ENCODE measurements at regions of chr3 and their contacts with region 1.

Region 1: DNA sequence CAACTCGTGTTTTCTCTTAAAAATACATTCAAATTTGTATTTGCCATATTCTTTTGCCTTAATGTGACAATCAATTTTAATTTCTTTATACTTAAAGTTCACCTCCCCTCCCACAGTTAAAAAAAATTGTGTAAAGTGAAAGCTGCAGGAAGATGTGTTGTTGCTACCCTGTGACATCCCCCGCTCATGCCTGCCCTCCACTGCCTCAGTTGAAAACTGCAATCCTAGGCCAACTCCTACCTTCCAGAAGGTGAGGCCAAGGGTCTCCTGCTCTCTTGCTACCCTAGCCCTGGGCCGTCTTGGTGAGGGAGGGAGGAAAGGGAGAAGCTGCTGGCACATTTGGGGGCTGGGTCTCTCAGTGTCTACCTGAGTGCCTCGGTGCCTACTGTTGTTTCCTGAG is 57.0 kb upstream of the CMTM7 start:
- DNase-seq: peak in 1 of 2 donors; percentile 20
- H3K4me3 ChIP-seq: no peak overlapping the region
- H3K27ac ChIP-seq: no peak overlapping the region
- H3K4me1 ChIP-seq: no peaks in the 10 kb centered on the region
- H3K27me3 ChIP-seq: no peaks in the 10 kb centered on the region
- CTCF ChIP-seq: peak in 1 of 6 experiments; percentile 32
- POLR2A ChIP-seq: no peak

Region 2: GRCh38 chr3:32177702-32178198 is 156.9 kb before region 1 on chr3:
- intact Hi-C with region 1: loop called (anchors 5 kb)
- DNase-seq: peak; percentile 67 to 74
- H3K4me3 ChIP-seq: no peak overlapping the region
- H3K27ac ChIP-seq: no peak overlapping the region
- H3K4me1 ChIP-seq: peaks cover 6 to 9% of the 10 kb centered on the region in 2 donors
- H3K27me3 ChIP-seq: no peaks in the 10 kb centered on the region
- CTCF ChIP-seq: peak in 5 of 6 experiments; percentile 62 to 95 (median 78)
- POLR2A ChIP-seq: no peak

Region 3: DNA sequence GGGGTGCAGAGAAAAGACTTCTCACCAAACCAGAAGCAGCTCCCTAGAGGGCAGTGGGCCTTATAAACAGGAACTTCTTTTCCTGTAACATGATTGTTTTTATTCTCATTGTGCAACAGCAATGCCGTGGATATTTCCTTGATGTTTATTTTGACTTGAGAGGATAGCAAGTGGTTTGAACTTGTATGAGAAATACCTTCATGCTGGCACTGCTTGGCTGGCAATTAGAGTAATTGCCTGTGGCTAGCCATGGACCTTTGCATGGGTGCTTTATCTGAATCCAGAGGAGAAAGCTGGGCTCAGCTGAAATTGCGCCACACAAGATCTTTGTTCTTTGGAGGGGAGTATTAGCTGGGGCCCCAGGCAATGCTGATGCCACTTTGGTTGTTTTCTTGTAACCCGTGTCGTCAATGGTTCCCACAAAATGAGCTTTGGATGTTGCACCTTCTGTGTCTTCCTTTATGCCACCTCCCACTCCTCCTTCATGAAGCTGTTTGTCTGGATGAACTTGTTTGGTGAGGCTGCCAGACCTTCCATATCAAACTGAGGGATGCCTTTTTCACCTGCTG is 58.3 kb before region 1 on chr3:
- intact Hi-C with region 1: no loop called
- DNase-seq: peak; percentile 59 to 65
- H3K4me3 ChIP-seq: no peak overlapping the region
- H3K27ac ChIP-seq: peak overlapping the region; percentile 41 to 91 (median 72)
- H3K4me1 ChIP-seq: peaks cover 33 to 34% of the 10 kb centered on the region in 2 donors
- H3K27me3 ChIP-seq: no peaks in the 10 kb centered on the region
- CTCF ChIP-seq: no peak
- POLR2A ChIP-seq: no peak

Region 4: DNA sequence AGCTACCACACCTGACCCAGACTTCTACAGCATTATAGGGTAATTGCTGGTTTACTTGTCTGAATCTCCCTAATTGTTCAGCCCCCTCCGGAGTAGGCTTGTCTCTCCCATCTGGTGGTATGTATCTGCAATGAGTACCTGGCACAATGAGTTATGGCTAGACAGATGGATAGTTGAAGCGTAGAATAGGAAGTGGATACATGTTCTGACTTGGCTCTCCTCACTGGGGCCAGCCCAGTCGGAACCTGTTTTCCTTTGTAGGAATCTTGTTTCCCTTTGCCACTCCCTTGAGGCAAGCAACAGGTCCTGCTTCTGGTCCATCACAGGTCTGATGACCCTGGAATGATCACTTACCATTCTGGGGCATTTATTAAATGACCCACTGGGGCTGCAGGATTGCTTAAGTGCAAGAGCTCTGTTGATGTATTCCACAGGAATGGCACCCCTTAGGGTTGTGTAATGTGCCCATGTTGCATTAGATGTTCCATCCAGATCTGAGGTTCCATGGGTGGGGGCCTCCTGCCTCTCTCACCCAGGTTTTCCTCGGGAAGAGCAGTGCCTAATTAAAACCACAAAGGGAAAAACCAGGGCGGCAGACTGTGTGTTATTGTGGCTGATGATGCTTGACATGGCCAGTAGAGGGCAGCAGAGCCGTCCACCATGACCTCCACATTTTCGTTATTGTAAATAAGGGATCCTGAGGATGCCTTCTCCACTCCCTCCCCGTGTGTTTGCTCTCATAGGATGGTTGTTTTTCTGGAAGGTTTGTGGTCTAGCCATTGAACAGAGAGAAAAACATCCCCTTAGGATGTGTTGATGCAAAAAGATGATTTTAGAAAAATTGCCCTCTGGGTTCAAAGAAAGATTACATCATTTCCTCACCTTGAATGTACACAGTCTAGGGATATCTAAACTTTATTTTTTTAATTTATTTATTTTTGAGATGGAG is 38.1 kb before region 1 on chr3:
- intact Hi-C with region 1: loop called (anchors 5 kb)
- DNase-seq: peak; percentile 63 to 72
- H3K4me3 ChIP-seq: no peak overlapping the region
- H3K27ac ChIP-seq: no peak overlapping the region
- H3K4me1 ChIP-seq: peaks cover 7 to 20% of the 10 kb centered on the region in 2 donors
- H3K27me3 ChIP-seq: no peaks in the 10 kb centered on the region
- CTCF ChIP-seq: peak; percentile 79 to 90 (median 86)
- POLR2A ChIP-seq: no peak

Measured in thyroid gland (tissue), 4 donors.